MCF 10A (cell line): ENCODE measurements at regions of chr11 and their contacts with region 1.

Region 1: DNA sequence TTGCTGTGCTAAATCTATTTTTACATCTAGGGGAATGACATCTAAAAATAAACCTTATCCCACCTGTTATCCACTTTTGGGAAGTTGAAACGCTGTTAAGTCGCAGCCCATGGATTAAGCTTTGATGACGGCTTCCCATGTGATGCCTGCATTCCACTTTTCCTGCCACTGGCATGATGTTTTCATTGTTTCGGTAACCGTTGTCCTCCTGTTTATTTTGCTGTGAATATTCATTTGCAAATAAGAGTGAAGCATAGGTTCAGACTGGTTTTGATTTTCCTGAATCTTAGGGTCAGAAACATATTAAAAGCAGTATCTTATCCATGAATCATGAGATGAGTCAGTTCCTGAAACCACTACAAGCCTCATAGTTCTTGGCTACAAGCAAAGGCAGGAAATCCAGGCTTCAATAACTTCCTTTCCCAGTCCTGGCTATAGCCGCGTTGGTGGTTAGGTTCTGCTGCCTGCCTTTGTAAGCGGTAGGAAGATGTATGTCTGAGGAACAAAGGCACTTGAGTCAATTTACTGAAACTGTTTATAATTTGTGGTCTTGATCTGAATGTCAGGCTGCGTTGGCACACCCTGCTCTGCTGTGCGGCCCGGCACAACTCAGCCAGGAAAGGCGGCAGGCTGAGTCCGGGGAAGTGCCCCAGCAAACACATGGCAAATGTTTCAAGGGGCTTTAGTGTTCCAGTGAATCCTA is 19.4 kb downstream of the TEAD1 start:
- DNase-seq: peak; percentile 97
- H3K4me3 Mint-ChIP-seq: peak overlapping the region; percentile 62
- H3K27ac Mint-ChIP-seq: peak overlapping the region; percentile 94
- H3K4me1 Mint-ChIP-seq: peaks cover 75% of the 10 kb centered on the region
- H3K27me3 Mint-ChIP-seq: no peaks in the 10 kb centered on the region
- CTCF ChIP-seq: no peak

Region 2: GRCh38 chr11:12706545-12707499 is 13.2 kb after region 1 on chr11:
- CTCF ChIA-PET with region 1: interaction called, 3 read pairs
- POLR2A ChIA-PET with region 1: interaction called, 93 read pairs
- intact Hi-C with region 1: no loop called
- DNase-seq: peak; percentile 83
- H3K4me3 Mint-ChIP-seq: peak overlapping the region; percentile 24
- H3K27ac Mint-ChIP-seq: peak overlapping the region; percentile 82
- H3K4me1 Mint-ChIP-seq: peaks cover 70% of the 10 kb centered on the region
- H3K27me3 Mint-ChIP-seq: no peaks in the 10 kb centered on the region
- CTCF ChIP-seq: no peak

Region 3: GRCh38 chr11:12737024-12737423 is 43.4 kb after region 1 on chr11:
- CTCF ChIA-PET with region 1: no interaction called
- POLR2A ChIA-PET with region 1: no interaction called
- intact Hi-C with region 1: no loop called
- DNase-seq: no peak
- H3K4me3 Mint-ChIP-seq: no peak overlapping the region
- H3K27ac Mint-ChIP-seq: no peak overlapping the region
- H3K4me1 Mint-ChIP-seq: peaks cover 16% of the 10 kb centered on the region
- H3K27me3 Mint-ChIP-seq: no peaks in the 10 kb centered on the region
- CTCF ChIP-seq: no peak

Region 4: DNA sequence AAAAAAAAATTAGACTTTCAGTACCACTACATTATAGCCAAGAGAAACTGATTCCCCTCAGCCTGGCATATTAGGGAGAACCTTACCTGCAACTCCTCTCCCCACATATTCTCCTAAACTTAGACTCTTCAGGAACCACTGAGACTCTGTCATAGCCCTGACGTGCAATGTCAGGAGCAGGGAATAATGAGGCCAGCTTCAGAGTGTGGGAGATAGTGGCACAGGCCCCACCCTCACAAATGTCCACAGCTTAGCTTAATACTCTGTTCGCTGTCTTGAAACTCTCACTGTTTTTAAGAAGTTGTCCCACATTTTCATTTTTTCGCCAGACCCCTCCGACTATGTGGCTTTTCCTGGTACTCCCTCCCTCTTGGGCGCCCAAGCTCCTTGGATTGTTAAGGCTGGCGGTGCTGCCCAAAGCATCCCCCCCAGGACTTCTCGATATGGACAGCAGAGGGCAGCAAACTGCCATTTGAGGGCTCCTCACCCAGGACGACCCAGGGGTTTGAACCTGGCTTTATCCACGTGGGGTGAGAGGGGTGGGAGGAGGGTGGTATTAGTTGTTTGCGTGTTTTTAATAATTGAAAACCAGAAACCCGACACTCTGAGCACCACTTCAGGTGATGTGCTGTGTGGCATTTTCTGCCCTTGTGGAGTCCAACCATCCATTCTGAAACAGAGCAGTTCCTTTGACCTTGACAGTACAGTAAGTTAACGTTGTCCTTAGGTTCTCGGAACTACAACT is 270.3 kb after region 1 on chr11:
- CTCF ChIA-PET with region 1: no interaction called
- POLR2A ChIA-PET with region 1: no interaction called
- intact Hi-C with region 1: no loop called
- DNase-seq: peak; percentile 80
- H3K4me3 Mint-ChIP-seq: no peak overlapping the region
- H3K27ac Mint-ChIP-seq: no peak overlapping the region
- H3K4me1 Mint-ChIP-seq: peaks cover 16% of the 10 kb centered on the region
- H3K27me3 Mint-ChIP-seq: no peaks in the 10 kb centered on the region
- CTCF ChIP-seq: peak; percentile 85